Breast epithelium (tissue), 4 donors: ENCODE measurements at regions of chr17 and their contacts with region 1.

Region 1: GRCh38 chr17:73791631-73792030 is 147.4 kb upstream of the SDK2 start:
- DNase-seq: no peak
- H3K4me3 ChIP-seq: no peak overlapping the region
- H3K27ac ChIP-seq: no peak overlapping the region
- H3K4me1 ChIP-seq: no peaks in the 10 kb centered on the region
- H3K27me3 ChIP-seq: peaks cover 0 to 9% of the 10 kb centered on the region in 2 donors
- CTCF ChIP-seq: no peak
- POLR2A ChIP-seq: no peak

Region 2: GRCh38 chr17:73759734-73760438 is 31.7 kb before region 1 on chr17:
- intact Hi-C with region 1: loop called (anchors 1 kb)
- DNase-seq: no peak
- H3K4me3 ChIP-seq: no peak overlapping the region
- H3K27ac ChIP-seq: no peak overlapping the region
- H3K4me1 ChIP-seq: no peaks in the 10 kb centered on the region
- H3K27me3 ChIP-seq: no peaks in the 10 kb centered on the region
- CTCF ChIP-seq: no peak
- POLR2A ChIP-seq: no peak